WTC11 (cell line): ENCODE measurements at regions of chr7 and their contacts with region 1.

Region 1: DNA sequence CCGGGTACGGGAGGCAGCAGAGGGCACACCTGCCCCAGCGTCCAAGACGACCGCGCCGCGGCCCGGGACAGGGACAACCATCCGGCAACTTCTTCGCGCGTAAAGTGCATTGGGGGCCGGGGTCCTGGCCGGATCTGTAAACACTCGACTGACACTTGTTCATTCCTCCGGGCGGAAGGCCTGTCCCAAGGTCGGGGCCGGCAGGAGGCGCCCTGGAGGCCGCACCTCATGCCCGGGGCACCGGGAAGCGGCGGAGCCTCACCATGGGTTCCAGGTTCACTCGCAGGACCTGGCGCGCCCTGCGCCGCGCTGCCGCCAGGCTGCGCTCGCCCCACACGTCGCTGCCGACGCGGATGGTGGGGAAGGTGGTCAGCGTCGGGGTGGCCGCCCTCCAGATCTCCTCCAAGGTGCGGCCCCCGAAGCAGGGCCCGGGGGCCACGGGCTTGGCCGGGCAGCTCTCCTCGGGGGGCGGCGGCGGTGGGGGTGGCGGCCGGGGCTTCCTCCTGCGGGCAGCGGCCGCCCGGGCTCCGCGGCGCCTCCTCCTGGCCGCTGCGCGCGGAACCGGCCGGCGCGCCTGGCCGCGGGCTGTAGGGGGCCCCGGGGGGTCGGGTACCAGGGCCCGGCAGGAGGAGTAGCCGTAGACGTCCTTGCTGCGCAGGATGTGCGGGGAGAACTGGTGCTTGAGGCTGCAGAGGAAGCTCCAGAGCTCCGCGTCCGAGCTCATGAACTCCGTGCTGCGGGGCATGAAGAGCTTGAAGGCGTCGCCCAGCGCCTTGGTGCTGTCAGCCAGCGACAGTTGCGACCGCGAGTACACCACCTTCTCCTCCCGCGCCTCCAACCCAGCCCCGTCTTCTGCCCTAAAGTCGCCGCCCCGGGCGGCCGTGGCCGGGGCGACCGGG is 746 bp downstream of the CCDC71L start:
- DNase-seq: peak; percentile 91
- ATAC-seq: peak; percentile 76
- H3K4me3 Mint-ChIP-seq: peak overlapping the region; percentile 86
- H3K27ac Mint-ChIP-seq: no peak overlapping the region
- H3K4me1 Mint-ChIP-seq: peaks cover 16% of the 10 kb centered on the region
- H3K27me3 Mint-ChIP-seq: no peaks in the 10 kb centered on the region
- CTCF ChIP-seq: no peak; the same call in 1 of the 2 replicates

Region 2: DNA sequence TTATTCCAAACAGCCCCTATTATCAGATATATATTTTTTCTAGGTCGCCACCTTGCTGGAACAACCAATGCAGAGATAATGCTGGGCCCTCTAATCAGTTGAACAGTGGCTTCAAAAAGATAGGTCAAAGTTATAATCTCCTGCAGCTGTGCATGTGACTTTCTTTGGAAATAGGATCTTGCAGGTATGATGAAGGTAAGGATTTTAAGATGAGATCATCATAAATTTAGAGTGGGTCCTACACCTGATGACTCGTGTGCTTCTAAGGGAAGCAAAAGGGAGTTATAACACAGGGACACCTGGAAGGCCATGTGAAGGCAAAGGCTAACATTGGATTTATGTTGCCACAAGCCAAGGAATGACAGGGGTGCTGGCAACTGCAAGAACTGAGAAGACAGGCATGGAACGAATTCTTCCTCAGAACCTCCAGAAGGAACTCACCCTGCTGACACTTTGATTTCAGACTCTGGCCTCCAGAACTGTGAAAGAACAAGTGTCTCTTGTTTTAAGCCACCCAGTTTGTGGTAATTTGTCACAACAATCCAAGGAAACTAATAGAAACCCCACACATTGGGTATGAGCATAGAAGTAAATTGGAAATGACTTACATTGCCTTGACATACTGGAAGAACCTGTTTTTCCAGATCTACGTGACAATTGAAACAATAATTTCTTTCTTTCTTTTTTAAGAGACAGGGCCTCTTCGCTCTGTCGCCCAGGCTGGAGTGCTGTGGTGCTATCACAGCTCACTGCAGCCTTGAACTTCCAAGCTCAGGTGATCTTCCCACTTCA is 33.6 kb before region 1 on chr7:
- CTCF ChIA-PET with region 1: no interaction called
- POLR2A ChIA-PET with region 1: no interaction called
- DNase-seq: no peak
- ATAC-seq: no peak
- H3K4me3 Mint-ChIP-seq: no peak overlapping the region
- H3K27ac Mint-ChIP-seq: no peak overlapping the region
- H3K4me1 Mint-ChIP-seq: peaks cover 26% of the 10 kb centered on the region
- H3K27me3 Mint-ChIP-seq: peaks cover 3% of the 10 kb centered on the region; the same call in 1 of the 2 replicates
- CTCF ChIP-seq: no peak

Region 3: GRCh38 chr7:106679153-106679931 is 19.1 kb after region 1 on chr7:
- CTCF ChIA-PET with region 1: no interaction called
- POLR2A ChIA-PET with region 1: no interaction called
- DNase-seq: no peak
- ATAC-seq: no peak
- H3K4me3 Mint-ChIP-seq: no peak overlapping the region
- H3K27ac Mint-ChIP-seq: no peak overlapping the region
- H3K4me1 Mint-ChIP-seq: no peaks in the 10 kb centered on the region
- H3K27me3 Mint-ChIP-seq: peaks cover 6% of the 10 kb centered on the region
- CTCF ChIP-seq: no peak

Region 4: GRCh38 chr7:106736508-106737201 is 76.4 kb after region 1 on chr7:
- CTCF ChIA-PET with region 1: interaction called, 20 read pairs
- POLR2A ChIA-PET with region 1: no interaction called
- DNase-seq: peak; percentile 30
- ATAC-seq: peak; percentile 98
- H3K4me3 Mint-ChIP-seq: no peak overlapping the region
- H3K27ac Mint-ChIP-seq: peak overlapping the region; percentile 93
- H3K4me1 Mint-ChIP-seq: peaks cover 15% of the 10 kb centered on the region
- H3K27me3 Mint-ChIP-seq: no peaks in the 10 kb centered on the region; the same call in 1 of the 2 replicates
- CTCF ChIP-seq: peak; percentile 32; the same call in 1 of the 2 replicates